ENCODE measurements at regions of chr5 and their contacts with region 1.

Region 1: GRCh38 chr5:139765409-139766217 is 30.0 kb upstream of the PSD2 start:
- DNase-seq: peak; percentile 57
- ATAC-seq: peak; percentile 92
- H3K4me3 ChIP-seq: peak overlapping the region; percentile 50 to 57
- H3K27ac ChIP-seq: peak overlapping the region; percentile 70
- H3K4me1 ChIP-seq: peaks cover 7% of the 10 kb centered on the region; the same call in 1 of the 2 replicates
- H3K27me3 ChIP-seq: no peaks in the 10 kb centered on the region
- CTCF ChIP-seq: peak; percentile 100

Region 2: DNA sequence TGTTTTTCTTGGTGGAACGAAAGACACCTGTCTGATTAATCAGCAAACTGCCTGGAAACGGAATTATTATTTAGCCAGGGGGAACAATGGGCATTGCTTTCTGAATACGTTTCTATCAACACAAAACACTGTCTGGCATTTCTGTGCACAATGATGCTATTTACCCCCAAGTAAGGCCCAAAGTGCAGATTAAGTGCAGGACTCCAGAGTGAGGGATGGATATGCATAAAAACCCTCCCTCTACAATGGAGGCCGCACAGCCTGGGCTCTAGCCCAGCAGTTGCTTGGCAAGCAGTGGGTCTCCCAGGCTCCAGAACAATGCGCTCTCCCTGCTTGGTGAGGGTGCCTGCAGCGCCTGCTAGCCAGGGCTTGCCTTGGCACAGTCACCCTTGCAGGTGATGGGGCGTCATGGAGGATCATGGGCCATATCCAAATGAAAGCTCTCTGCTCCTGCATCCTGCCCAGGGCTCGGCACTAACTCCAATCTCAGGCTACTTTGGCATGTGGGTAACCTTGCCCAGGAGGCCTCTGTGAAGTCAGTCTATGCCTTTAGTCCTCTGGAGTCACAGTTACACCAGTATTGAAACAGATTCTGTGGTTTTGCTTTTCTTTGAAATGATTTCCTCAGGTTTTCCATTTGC is 350.3 kb before region 1 on chr5:
- CTCF ChIA-PET with region 1: no interaction called
- POLR2A ChIA-PET with region 1: interaction called, 12 read pairs
- in situ Hi-C with region 1: no loop called
- intact Hi-C with region 1: no loop called
- DNase-seq: no peak
- ATAC-seq: no peak
- H3K4me3 ChIP-seq: no peak overlapping the region
- H3K27ac ChIP-seq: no peak overlapping the region
- H3K4me1 ChIP-seq: no peaks in the 10 kb centered on the region
- H3K27me3 ChIP-seq: no peaks in the 10 kb centered on the region
- CTCF ChIP-seq: no peak

Region 3: DNA sequence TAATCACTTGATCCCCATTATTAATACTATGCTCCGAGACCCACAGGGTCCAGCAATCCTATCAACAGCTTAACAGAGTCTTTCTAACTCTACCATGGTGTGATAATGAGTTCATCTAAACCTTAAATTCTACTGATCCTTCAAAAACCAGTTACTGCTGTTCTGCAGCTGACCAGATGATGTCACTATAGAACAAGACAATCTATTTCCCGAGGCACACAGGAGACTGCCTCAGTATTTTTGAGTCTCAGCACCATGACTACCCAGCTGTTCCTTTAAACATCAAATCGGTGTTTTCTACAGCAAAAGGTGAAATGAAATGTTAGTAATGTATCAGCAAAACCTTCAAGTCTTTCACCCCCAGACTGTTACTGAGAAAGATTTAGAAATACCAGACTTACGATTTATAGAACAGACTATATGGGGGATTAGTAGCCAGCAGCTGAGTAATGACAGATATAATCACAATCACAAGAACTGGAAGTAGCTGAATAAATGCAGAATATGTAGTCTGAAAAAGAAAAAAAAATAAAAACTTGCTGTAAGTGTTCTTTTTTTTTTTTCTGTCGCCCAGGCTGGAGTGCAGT is 343.2 kb before region 1 on chr5:
- CTCF ChIA-PET with region 1: no interaction called
- POLR2A ChIA-PET with region 1: interaction called, 13 read pairs
- in situ Hi-C with region 1: no loop called
- intact Hi-C with region 1: no loop called
- DNase-seq: peak; percentile 63
- ATAC-seq: peak; percentile 85
- H3K4me3 ChIP-seq: no peak overlapping the region
- H3K27ac ChIP-seq: no peak overlapping the region
- H3K4me1 ChIP-seq: no peaks in the 10 kb centered on the region
- H3K27me3 ChIP-seq: no peaks in the 10 kb centered on the region
- CTCF ChIP-seq: peak; percentile 87

Region 4: DNA sequence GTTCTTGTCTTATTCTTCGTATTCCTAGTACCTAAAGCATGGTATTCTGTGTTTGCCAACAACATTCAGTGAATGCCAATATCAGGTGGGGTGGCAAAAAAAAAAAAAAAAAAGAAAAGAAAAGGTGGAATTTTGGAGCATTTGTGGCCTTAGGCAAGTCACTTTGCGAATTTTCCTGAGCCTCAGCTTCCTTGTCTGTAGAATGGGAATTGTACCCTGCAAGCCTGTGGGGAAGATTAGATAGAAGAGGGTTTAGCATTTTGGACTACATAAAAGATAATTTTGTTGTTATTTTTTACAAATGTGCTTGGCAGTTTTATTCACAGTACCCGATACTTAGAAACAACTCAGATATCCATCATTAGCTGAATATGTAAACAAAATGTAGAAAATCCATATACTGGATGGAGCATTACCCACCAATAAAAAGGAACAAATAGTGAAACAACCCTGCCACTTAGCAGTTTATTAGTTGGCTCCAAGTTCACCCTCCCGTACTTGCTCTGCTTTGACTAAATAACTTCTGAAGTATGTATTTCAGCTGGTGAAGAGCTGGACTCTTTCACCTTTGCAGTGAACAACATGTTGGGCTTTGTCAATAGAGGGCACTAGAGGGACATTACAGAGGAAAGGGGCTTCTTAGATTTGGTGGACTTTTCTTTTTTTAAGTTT is 190.8 kb before region 1 on chr5:
- CTCF ChIA-PET with region 1: interaction called, 10 read pairs
- POLR2A ChIA-PET with region 1: no interaction called
- in situ Hi-C with region 1: no loop called
- intact Hi-C with region 1: no loop called
- DNase-seq: no peak
- ATAC-seq: peak; percentile 71
- H3K4me3 ChIP-seq: no peak overlapping the region
- H3K27ac ChIP-seq: no peak overlapping the region
- H3K4me1 ChIP-seq: peaks cover 4% of the 10 kb centered on the region; the same call in 1 of the 2 replicates
- H3K27me3 ChIP-seq: no peaks in the 10 kb centered on the region
- CTCF ChIP-seq: no peak; the same call in 1 of the 2 replicates

Region 5: GRCh38 chr5:139588962-139589361 is 176.7 kb before region 1 on chr5:
- CTCF ChIA-PET with region 1: no interaction called
- POLR2A ChIA-PET with region 1: no interaction called
- in situ Hi-C with region 1: no loop called
- intact Hi-C with region 1: no loop called
- DNase-seq: no peak
- ATAC-seq: no peak
- H3K4me3 ChIP-seq: no peak overlapping the region
- H3K27ac ChIP-seq: no peak overlapping the region
- H3K4me1 ChIP-seq: peaks cover 6% of the 10 kb centered on the region
- H3K27me3 ChIP-seq: no peaks in the 10 kb centered on the region
- CTCF ChIP-seq: no peak

Region 6: GRCh38 chr5:139633295-139634027 is 132.2 kb before region 1 on chr5:
- CTCF ChIA-PET with region 1: interaction called, 24 read pairs
- POLR2A ChIA-PET with region 1: no interaction called
- in situ Hi-C with region 1: no loop called
- intact Hi-C with region 1: loop called (anchors 1 kb)
- DNase-seq: peak; percentile 79
- ATAC-seq: peak; percentile 70
- H3K4me3 ChIP-seq: no peak overlapping the region
- H3K27ac ChIP-seq: peak overlapping the region; percentile 19; the same call in 1 of the 2 replicates
- H3K4me1 ChIP-seq: peaks cover 32% of the 10 kb centered on the region
- H3K27me3 ChIP-seq: no peaks in the 10 kb centered on the region
- CTCF ChIP-seq: peak; percentile 98

Region 7: GRCh38 chr5:139968547-139969261 is 203.1 kb after region 1 on chr5:
- CTCF ChIA-PET with region 1: interaction called, 10 read pairs
- POLR2A ChIA-PET with region 1: no interaction called
- in situ Hi-C with region 1: no loop called
- intact Hi-C with region 1: no loop called
- DNase-seq: peak; percentile 72
- ATAC-seq: peak; percentile 97
- H3K4me3 ChIP-seq: no peak overlapping the region
- H3K27ac ChIP-seq: no peak overlapping the region
- H3K4me1 ChIP-seq: peaks cover 11% of the 10 kb centered on the region
- H3K27me3 ChIP-seq: no peaks in the 10 kb centered on the region
- CTCF ChIP-seq: peak; percentile 99

Measured in Panc1 (cell line).